ENCODE measurements at regions of chr13 and their contacts with region 1.

Region 1: GRCh38 chr13:52968074-52968700 is 60.4 kb upstream of the OLFM4 start:
- DNase-seq: peak; percentile 74
- ATAC-seq: peak; percentile 85 to 90

Region 2: GRCh38 chr13:52617070-52618060 is 350.8 kb before region 1 on chr13:
- intact Hi-C with region 1: loop called in 1 of 2 experiments (anchors 10 kb)
- DNase-seq: peak; percentile 83
- ATAC-seq: peak; percentile 99

Region 3: DNA sequence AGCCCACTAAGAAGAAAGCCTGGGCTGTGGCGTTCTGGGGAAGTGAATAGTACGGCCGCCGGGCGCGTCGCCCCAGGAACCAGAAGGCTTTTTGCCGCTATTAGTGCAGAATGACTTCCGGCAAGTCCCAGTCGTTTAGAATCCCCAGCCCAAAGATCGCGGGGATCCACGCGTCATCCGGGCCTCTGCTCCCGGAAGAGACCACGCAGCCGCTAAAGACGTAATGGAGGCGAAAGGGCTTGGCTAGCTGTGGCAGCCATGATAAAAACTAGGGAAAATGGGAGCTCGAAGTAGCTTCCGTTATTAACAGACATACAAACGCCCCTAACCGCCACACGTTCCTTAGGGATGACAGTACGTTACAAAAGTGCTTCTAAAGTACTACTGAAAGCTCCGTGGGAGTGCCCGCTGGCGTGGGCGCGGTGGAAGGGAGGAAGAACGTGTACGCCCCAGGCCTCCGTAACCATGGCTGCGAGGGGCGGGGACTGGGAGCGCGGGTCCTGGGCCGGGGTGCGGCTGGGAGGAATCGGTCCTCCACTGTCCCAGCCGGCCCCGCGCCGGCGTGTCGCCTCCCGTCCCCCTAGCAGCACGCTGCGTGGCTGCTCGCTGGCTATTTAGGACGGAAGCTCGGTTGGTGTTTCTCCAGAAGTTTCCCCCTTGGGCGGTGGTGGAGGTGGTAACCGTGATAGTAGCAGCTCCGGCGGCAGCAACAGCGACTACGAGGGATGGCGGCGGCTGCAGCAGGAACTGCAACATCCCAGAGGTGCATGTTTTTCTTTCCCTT is 315.8 kb before region 1 on chr13 and contains the start of gene SUGT1:
- intact Hi-C with region 1: no loop called
- DNase-seq: peak; percentile 98
- ATAC-seq: peak; percentile 99
- total RNA-seq, gene SUGT1: 48.7 to 56.2 TPM

Region 4: DNA sequence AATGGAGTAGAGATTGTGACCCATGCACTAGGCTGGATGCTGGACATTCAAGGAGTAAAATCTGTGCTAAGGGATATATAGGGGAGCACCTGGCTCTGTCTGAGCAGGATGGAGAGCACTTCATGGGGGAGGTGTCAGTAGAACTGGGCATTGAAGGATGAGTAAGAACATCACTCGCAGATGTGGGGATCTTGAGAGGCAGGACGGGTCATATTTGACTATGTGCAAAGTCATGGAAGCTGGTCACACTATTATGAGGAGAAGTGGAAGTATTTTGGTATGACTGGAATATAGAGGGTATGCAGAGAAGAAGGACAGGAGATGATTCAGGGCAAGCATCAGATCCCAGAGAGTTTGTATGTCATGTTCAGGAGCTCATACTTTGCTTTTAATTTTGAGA is 56.8 kb before region 1 on chr13:
- intact Hi-C with region 1: no loop called
- DNase-seq: no peak
- ATAC-seq: no peak

Region 5: GRCh38 chr13:53137779-53138178 is 169.6 kb after region 1 on chr13:
- intact Hi-C with region 1: loop called in 1 of 2 experiments (anchors 10 kb)
- DNase-seq: no peak
- ATAC-seq: peak; percentile 58 to 86

Region 6: GRCh38 chr13:53151336-53152056 is 183.3 kb after region 1 on chr13:
- intact Hi-C with region 1: loop called in 1 of 2 experiments (anchors 5 kb)
- DNase-seq: no peak
- ATAC-seq: peak in 1 of 2 donors; percentile 50

Region 7: GRCh38 chr13:53200498-53201453 is 232.6 kb after region 1 on chr13:
- intact Hi-C with region 1: no loop called
- DNase-seq: peak; percentile 41
- ATAC-seq: peak; percentile 84 to 85

Region 8: GRCh38 chr13:53460796-53461195 is 492.6 kb after region 1 on chr13:
- intact Hi-C with region 1: no loop called
- DNase-seq: no peak
- ATAC-seq: no peak